Activated naive CD4-positive, alpha-beta T cell treated with anti-CD3 and anti-CD28 coated beads for 36 hours (primary cell): ENCODE measurements at regions of chr6 and their contacts with region 1.

Region 1: GRCh38 chr6:34887753-34888513 is at the start of gene TAF11:
- DNase-seq: peak; percentile 97
- H3K4me3 Mint-ChIP-seq: peak within 1 kb of the TSS; percentile 99
- H3K27ac Mint-ChIP-seq: peak within 1 kb of the TSS; percentile 96
- H3K4me1 Mint-ChIP-seq: peaks cover 52% of the 10 kb centered on the region
- H3K27me3 Mint-ChIP-seq: no peaks in the 10 kb centered on the region
- total RNA-seq, gene TAF11: 27.3 to 28.5 TPM

Region 2: DNA sequence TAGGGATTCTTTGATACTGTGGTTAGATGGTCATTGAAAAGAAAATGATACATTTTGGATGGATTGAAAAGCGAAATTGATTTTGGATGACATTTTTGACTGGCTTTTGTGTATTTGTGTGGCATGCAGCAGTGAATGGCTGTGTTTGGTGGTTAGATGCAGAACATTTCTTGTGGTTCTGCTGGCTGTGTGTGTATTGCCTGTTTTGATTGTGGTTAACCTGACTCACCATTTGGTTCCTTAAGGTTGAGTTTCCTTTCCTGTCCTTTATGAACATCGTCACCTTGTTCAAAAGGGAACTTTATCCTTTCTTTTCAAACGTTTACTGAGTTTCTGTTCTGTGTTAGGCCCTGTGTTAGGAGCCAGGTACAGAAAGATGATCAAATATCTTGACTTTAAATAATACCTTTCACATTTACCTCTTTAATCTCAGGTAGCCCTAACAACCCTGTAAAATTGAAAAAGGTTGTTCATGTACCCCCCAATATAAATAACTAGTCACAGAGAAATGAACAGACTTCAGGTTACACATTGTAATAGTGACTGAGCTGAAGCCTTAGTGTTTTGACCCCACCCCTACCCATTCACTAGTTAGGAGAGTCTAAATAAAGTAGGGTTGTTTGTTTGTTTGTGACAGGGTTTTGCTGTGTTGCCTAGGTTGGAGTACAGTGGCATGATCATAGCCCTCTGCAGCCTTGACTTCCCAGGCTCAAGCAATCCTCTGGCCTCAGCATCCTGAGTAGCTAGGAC is 25.0 kb after region 1 on chr6:
- CTCF ChIA-PET with region 1: no interaction called
- intact Hi-C with region 1: loop called (anchors 1 kb)
- DNase-seq: peak; percentile 67
- H3K4me3 Mint-ChIP-seq: no peak overlapping the region
- H3K27ac Mint-ChIP-seq: peak overlapping the region; percentile 65
- H3K4me1 Mint-ChIP-seq: peaks cover 28% of the 10 kb centered on the region
- H3K27me3 Mint-ChIP-seq: no peaks in the 10 kb centered on the region

Region 3: DNA sequence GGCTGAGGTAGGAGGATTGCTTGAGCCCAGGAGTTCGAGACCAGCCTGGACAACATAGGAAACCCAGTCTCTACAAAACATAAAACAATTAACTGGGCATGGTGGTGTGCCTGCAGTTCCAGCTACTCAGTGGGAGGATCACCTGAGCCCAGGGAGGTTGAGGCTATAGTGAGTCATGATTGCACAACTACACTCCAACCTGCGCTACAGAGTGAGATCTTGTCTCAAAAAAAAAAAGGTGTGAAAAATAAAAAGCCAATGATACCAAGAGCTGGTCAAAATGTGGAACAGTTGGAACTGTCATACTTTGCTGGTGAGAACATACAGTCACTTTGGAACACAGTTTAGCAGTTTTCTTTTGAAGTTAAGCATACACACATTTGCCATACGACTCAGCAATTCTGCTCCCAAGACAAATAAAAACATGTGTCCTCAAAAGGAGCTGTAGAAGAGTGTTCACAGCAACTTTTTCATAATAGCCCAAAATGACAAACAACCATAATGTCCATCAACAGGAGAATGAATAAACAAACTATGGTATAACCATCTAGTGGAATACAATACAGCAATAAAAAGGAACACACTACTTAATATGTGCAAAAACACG is 822.4 kb after region 1 on chr6:
- CTCF ChIA-PET with region 1: no interaction called
- intact Hi-C with region 1: no loop called
- DNase-seq: peak; percentile 79
- H3K4me3 Mint-ChIP-seq: no peak overlapping the region
- H3K27ac Mint-ChIP-seq: peak overlapping the region; percentile 75
- H3K4me1 Mint-ChIP-seq: peaks cover 30% of the 10 kb centered on the region
- H3K27me3 Mint-ChIP-seq: no peaks in the 10 kb centered on the region